GM12878 (cell line): ENCODE measurements at regions of chr14 and their contacts with region 1.

Region 1: DNA sequence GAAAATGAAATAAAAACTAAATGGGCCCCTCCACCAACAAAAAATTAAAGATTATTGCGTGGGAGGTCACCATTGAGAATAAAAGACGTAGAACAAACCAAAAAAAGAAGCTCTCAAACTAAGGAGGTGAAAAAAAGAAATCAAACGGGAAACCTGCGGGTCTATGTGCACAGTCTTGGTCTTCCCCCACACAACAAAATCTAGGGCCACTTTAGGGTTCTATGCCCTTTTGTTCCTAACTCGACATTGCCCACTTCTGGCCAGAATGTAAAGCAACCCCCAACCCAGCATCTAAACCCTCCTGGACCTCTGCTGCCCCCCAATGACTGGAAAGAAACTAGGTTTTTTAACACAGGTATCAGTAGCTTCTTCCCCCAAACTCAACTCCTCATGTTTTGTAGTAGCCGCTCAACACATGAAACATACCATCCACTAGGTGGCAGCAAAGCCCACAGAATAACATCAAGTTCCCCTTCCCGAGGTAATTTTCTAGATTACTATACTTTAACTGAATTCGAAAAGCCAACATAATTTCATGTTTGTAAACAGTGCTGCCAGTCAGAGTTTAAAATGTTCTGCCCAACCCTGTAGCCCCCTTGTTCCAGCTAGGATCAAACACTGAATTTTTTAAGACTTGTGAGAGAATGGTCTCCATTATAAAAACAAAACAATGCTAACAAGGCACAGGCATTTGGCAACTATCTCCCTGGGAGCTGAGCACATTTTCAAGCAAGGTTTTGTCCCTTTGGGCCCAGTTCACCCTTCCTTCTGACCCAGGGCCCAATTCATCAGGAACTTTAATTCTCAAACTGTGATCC is 18.7 kb downstream of the DAD1 start:
- DNase-seq: peak; percentile 99
- ATAC-seq: peak; percentile 72
- H3K4me3 ChIP-seq: peak overlapping the region; percentile 30
- H3K27ac ChIP-seq: peak overlapping the region; percentile 97
- H3K4me1 ChIP-seq: peaks cover 43% of the 10 kb centered on the region
- H3K27me3 ChIP-seq: no peaks in the 10 kb centered on the region
- CTCF ChIP-seq: peak; percentile 98 to 100 (median 100); a peak in 5 of 6 replicates
- EP300 ChIP-seq: no peak
- POLR2A ChIP-seq: no peak
- RAD21 ChIP-seq: peak; percentile 99

Region 2: GRCh38 chr14:22375321-22375930 is 194.9 kb before region 1 on chr14:
- CTCF ChIA-PET with region 1: interaction called, 13 read pairs
- POLR2A ChIA-PET with region 1: no interaction called
- RAD21 ChIA-PET with region 1: interaction called, 156 read pairs
- SMC1A ChIA-PET with region 1: interaction called, 53 read pairs
- in situ Hi-C with region 1: no loop called
- intact Hi-C with region 1: no loop called
- DNase-seq: no peak
- ATAC-seq: peak; percentile 75
- H3K4me3 ChIP-seq: no peak overlapping the region
- H3K27ac ChIP-seq: no peak overlapping the region
- H3K4me1 ChIP-seq: no peaks in the 10 kb centered on the region
- H3K27me3 ChIP-seq: no peaks in the 10 kb centered on the region
- CTCF ChIP-seq: peak; percentile 50 to 60 (median 50)
- EP300 ChIP-seq: no peak
- POLR2A ChIP-seq: no peak
- RAD21 ChIP-seq: peak; percentile 79

Region 3: DNA sequence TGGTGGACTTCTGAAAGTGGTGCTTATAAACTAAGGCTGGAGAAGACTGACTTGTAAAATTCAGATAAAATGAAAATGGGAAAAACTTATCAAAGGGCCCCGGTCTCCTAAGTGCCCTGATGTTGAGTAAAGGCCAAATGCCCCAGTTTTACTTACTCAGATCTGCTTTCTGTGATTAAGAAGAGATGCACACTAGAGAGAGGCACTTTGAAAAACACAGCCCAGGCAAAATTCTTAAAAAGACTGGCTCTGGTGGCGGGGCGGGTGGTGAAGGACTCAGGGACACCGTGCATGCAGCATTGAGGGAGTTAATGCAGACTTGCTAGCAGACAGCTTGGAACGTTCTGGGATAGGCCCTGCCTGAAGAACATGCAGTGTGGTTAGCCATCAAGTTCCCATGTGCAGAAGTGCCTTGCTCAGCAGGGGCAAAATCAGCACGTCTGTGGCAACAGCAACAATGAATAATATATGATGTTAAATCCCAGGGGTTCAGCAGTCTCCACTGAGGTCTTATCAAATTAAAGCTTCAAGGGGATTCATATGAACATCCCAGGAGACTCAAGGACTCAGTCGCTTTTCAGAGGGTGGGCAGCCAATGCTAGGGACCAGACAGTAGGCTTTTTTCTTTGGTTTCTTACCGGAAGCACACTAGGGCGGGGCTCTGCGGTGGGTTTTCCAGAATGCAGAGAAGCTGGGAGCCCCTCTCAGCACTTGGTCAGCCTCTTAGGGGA is 86.3 kb before region 1 on chr14:
- CTCF ChIA-PET with region 1: interaction called, 236 read pairs
- POLR2A ChIA-PET with region 1: interaction called, 9 read pairs
- RAD21 ChIA-PET with region 1: interaction called, 171 read pairs
- SMC1A ChIA-PET with region 1: interaction called, 64 read pairs
- in situ Hi-C with region 1: no loop called
- intact Hi-C with region 1: no loop called
- DNase-seq: no peak
- ATAC-seq: peak; percentile 39
- H3K4me3 ChIP-seq: peak overlapping the region; percentile 72
- H3K27ac ChIP-seq: peak overlapping the region; percentile 98
- H3K4me1 ChIP-seq: peaks cover 84% of the 10 kb centered on the region
- H3K27me3 ChIP-seq: no peaks in the 10 kb centered on the region
- CTCF ChIP-seq: no peak
- EP300 ChIP-seq: no peak
- POLR2A ChIP-seq: peak; percentile 52
- RAD21 ChIP-seq: no peak

Region 4: DNA sequence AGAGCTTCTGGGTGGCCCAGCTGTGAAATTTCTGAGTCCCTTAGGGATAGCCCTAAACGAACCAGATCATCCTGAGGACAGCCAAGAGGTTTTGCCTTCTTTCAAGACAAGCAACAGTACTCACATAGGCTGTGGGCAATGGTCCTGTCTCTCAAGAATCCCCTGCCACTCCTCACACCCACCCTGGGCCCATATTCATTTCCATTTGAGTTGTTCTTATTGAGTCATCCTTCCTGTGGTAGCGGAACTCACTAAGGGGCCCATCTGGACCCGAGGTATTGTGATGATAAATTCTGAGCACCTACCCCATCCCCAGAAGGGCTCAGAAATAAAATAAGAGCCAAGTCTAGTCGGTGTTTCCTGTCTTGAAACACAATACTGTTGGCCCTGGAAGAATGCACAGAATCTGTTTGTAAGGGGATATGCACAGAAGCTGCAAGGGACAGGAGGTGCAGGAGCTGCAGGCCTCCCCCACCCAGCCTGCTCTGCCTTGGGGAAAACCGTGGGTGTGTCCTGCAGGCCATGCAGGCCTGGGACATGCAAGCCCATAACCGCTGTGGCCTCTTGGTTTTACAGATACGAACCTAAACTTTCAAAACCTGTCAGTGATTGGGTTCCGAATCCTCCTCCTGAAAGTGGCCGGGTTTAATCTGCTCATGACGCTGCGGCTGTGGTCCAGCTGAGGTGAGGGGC is 20.2 kb before region 1 on chr14:
- CTCF ChIA-PET with region 1: interaction called, 180 read pairs
- POLR2A ChIA-PET with region 1: interaction called, 74 read pairs
- RAD21 ChIA-PET with region 1: interaction called, 190 read pairs
- SMC1A ChIA-PET with region 1: interaction called, 75 read pairs
- in situ Hi-C with region 1: no loop called
- intact Hi-C with region 1: no loop called
- DNase-seq: peak; percentile 87
- ATAC-seq: peak; percentile 85
- H3K4me3 ChIP-seq: no peak overlapping the region; the same call in 1 of the 2 replicates
- H3K27ac ChIP-seq: peak overlapping the region; percentile 97
- H3K4me1 ChIP-seq: peaks cover 61% of the 10 kb centered on the region
- H3K27me3 ChIP-seq: no peaks in the 10 kb centered on the region
- CTCF ChIP-seq: no peak
- EP300 ChIP-seq: peak; percentile 60 to 82; a peak in 2 of 4 replicates
- POLR2A ChIP-seq: peak; percentile 53; the same call in 1 of the 2 replicates
- RAD21 ChIP-seq: no peak; the same call in 1 of the 2 replicates

Region 5: GRCh38 chr14:22766456-22767322 is 196.3 kb after region 1 on chr14 and contains the start of gene OXA1L:
- CTCF ChIA-PET with region 1: interaction called, 16 read pairs
- POLR2A ChIA-PET with region 1: interaction called, 9 read pairs
- RAD21 ChIA-PET with region 1: interaction called, 9 read pairs
- SMC1A ChIA-PET with region 1: interaction called, 11 read pairs
- in situ Hi-C with region 1: no loop called
- intact Hi-C with region 1: loop called (anchors 2 kb)
- DNase-seq: peak; percentile 92
- ATAC-seq: peak; percentile 89
- H3K4me3 ChIP-seq: peak within 1 kb of the TSS; percentile 91
- H3K27ac ChIP-seq: peak within 1 kb of the TSS; percentile 98
- H3K4me1 ChIP-seq: no peaks in the 10 kb centered on the region; the same call in 1 of the 2 replicates
- H3K27me3 ChIP-seq: no peaks in the 10 kb centered on the region
- CTCF ChIP-seq: no peak
- EP300 ChIP-seq: no peak
- POLR2A ChIP-seq: peak; percentile 92
- RAD21 ChIP-seq: no peak
- polyA plus RNA-seq, gene OXA1L: 110 to 116 TPM

Region 6: GRCh38 chr14:22886500-22887259 is 316.3 kb after region 1 on chr14:
- CTCF ChIA-PET with region 1: interaction called, 8 read pairs
- POLR2A ChIA-PET with region 1: interaction called, 4 read pairs
- RAD21 ChIA-PET with region 1: interaction called, 11 read pairs
- SMC1A ChIA-PET with region 1: interaction called, 4 read pairs
- in situ Hi-C with region 1: no loop called
- intact Hi-C with region 1: no loop called
- DNase-seq: peak; percentile 45
- ATAC-seq: peak; percentile 72
- H3K4me3 ChIP-seq: peak overlapping the region; percentile 91
- H3K27ac ChIP-seq: peak overlapping the region; percentile 86
- H3K4me1 ChIP-seq: peaks cover 35% of the 10 kb centered on the region
- H3K27me3 ChIP-seq: no peaks in the 10 kb centered on the region
- CTCF ChIP-seq: peak; percentile 13 to 46 (median 18); a peak in 4 of 6 replicates
- EP300 ChIP-seq: no peak; a peak in 1 of 4 replicates
- POLR2A ChIP-seq: peak; percentile 79; the same call in 1 of the 2 replicates
- RAD21 ChIP-seq: no peak